IMR-90 (cell line): ENCODE measurements at regions of chr5 and their contacts with region 1.

Region 1: DNA sequence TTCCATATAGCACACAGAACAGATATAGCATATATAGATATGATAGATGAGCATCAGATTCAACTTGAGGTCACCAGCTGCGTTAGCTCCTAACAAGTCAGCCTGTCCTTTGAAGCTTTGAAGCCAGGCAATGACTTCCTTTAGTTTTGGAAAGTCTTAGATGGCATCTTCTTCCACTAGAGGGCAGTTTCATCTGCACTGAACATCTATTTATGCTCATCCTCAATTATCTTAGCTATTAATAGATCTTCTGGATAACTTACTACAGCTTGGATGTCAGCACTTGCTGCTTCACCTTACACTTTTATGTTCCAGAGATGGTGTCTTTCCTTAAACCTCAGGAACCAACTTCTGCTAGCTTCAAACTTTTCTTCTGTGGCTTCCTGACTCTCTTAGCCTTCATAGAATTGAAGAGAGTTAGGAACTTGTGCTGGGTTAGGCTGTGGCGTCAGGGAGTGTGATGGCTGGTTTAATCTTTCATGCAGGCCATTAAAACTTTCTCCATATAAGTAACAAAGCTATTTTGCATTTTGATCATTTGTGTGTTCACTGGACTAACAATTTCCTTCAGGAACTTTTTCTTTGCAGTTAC is 1401.4 kb downstream of the EFNA5 start:
- DNase-seq: peak; percentile 57
- ATAC-seq: peak; percentile 69
- H3K4me3 ChIP-seq: no peak overlapping the region
- H3K27ac ChIP-seq: no peak overlapping the region
- H3K4me1 ChIP-seq: no peaks in the 10 kb centered on the region
- H3K27me3 ChIP-seq: no peaks in the 10 kb centered on the region
- CTCF ChIP-seq: peak; percentile 71
- POLR2A ChIP-seq: no peak
- RAD21 ChIP-seq: peak; percentile 73

Region 2: DNA sequence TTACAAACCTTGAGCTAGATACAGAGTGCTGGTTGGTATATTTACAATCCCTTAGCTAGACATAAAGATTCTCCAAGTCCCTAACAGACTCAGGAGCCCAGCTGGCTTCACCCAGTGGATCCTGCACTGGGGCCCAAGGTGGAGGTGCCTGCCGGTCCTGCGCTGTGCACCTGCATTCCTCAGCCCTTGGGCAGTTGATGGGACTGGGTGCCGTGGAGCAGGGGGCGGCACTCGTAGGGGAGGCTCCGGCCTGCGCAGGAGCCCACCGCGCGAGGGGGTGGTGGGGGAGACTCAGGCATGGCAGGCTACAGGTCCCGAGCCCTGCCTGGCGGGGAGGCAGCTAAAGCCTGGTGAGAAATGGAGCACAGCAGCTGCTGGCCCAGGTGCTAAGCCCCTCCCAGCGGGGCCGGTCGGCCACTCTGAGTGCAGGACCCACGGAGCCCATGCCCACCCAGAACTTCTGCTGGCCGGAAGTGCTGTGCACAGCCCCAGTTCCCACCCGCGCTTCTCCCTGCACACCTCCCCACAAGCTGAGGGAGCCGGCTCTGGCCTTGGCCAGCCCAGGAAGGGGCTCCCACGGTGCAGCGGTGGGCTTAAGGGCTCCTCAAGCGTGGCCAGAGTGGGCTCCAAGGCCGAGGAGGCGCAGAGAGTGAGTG is 63.3 kb before region 1 on chr5:
- CTCF ChIA-PET with region 1: no interaction called
- POLR2A ChIA-PET with region 1: no interaction called
- dilution Hi-C with region 1: no loop called
- in situ Hi-C with region 1: no loop called
- intact Hi-C with region 1: no loop called
- DNase-seq: no peak
- ATAC-seq: no peak
- H3K4me3 ChIP-seq: no peak overlapping the region
- H3K27ac ChIP-seq: no peak overlapping the region
- H3K4me1 ChIP-seq: no peaks in the 10 kb centered on the region
- H3K27me3 ChIP-seq: no peaks in the 10 kb centered on the region
- CTCF ChIP-seq: no peak
- POLR2A ChIP-seq: no peak
- RAD21 ChIP-seq: no peak

Region 3: GRCh38 chr5:106241432-106241831 is 27.9 kb before region 1 on chr5:
- CTCF ChIA-PET with region 1: no interaction called
- POLR2A ChIA-PET with region 1: no interaction called
- dilution Hi-C with region 1: no loop called
- in situ Hi-C with region 1: no loop called
- intact Hi-C with region 1: no loop called
- DNase-seq: no peak
- ATAC-seq: no peak
- H3K4me3 ChIP-seq: no peak overlapping the region
- H3K27ac ChIP-seq: no peak overlapping the region
- H3K4me1 ChIP-seq: no peaks in the 10 kb centered on the region
- H3K27me3 ChIP-seq: no peaks in the 10 kb centered on the region
- CTCF ChIP-seq: no peak
- POLR2A ChIP-seq: no peak
- RAD21 ChIP-seq: no peak

Region 4: GRCh38 chr5:106875591-106876297 is 606.4 kb after region 1 on chr5:
- CTCF ChIA-PET with region 1: interaction called, 3 read pairs
- POLR2A ChIA-PET with region 1: no interaction called
- dilution Hi-C with region 1: no loop called
- in situ Hi-C with region 1: no loop called
- intact Hi-C with region 1: loop called (anchors 5 kb)
- DNase-seq: peak; percentile 36
- ATAC-seq: peak; percentile 68
- H3K4me3 ChIP-seq: no peak overlapping the region
- H3K27ac ChIP-seq: no peak overlapping the region
- H3K4me1 ChIP-seq: no peaks in the 10 kb centered on the region
- H3K27me3 ChIP-seq: no peaks in the 10 kb centered on the region
- CTCF ChIP-seq: peak; percentile 51
- POLR2A ChIP-seq: no peak
- RAD21 ChIP-seq: peak; percentile 64